ENCODE measurements at regions of chr17 and their contacts with region 1.

Region 1: GRCh38 chr17:36534840-36535668 is at the starts of genes MYO19 and PIGW:
- DNase-seq: peak; percentile 91 to 94 (median 93)
- H3K4me3 ChIP-seq: peak within 1 kb of the TSS; percentile 54 to 96 (median 87)
- H3K27ac ChIP-seq: peak within 1 kb of the TSS; percentile 80 to 93
- H3K4me1 ChIP-seq: peaks cover 3 to 22% (median 16%) of the 10 kb centered on the region in 4 experiments
- H3K27me3 ChIP-seq: no peaks in the 10 kb centered on the region

Region 2: GRCh38 chr17:36072431-36073121 is 462.5 kb before region 1 on chr17:
- CTCF ChIA-PET with region 1: no interaction called
- POLR2A ChIA-PET with region 1: no interaction called
- DNase-seq: peak; percentile 50 to 58 (median 57)
- H3K4me3 ChIP-seq: no peak overlapping the region
- H3K27ac ChIP-seq: no peak overlapping the region
- H3K4me1 ChIP-seq: peaks cover 0 to 7% (median 0%) of the 10 kb centered on the region in 4 experiments
- H3K27me3 ChIP-seq: no peaks in the 10 kb centered on the region

Region 3: DNA sequence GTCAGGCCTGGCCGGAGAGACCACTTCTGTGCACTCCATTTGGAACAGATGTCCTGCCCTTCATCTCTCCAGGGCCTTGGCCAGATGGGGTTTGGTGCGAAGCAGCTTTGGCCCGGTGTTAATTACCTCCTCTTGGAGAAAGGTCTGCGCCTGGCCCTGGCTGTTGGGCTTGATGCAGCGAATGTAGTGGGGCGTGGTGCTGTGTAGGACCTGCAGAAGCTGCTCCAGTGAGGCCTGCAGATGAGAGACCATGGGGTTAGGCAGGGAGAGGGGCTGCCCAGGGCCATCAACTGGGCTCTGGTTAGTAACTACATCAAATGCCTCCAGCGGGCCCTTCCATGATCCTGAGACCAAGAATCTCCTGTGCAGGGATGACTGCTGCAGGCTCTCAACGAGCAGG is 29.9 kb before region 1 on chr17:
- CTCF ChIA-PET with region 1: no interaction called
- POLR2A ChIA-PET with region 1: no interaction called
- DNase-seq: no peak
- H3K4me3 ChIP-seq: no peak overlapping the region
- H3K27ac ChIP-seq: no peak overlapping the region
- H3K4me1 ChIP-seq: no peaks in the 10 kb centered on the region
- H3K27me3 ChIP-seq: no peaks in the 10 kb centered on the region

Region 4: GRCh38 chr17:36545465-36546417 is 10.7 kb after region 1 on chr17:
- CTCF ChIA-PET with region 1: interaction called, 5 read pairs
- POLR2A ChIA-PET with region 1: interaction called, 30 read pairs
- DNase-seq: peak; percentile 99
- H3K4me3 ChIP-seq: peak overlapping the region; percentile 64 to 93 (median 78)
- H3K27ac ChIP-seq: peak overlapping the region; percentile 87 to 94
- H3K4me1 ChIP-seq: peaks cover 16 to 47% (median 34%) of the 10 kb centered on the region in 4 experiments
- H3K27me3 ChIP-seq: no peaks in the 10 kb centered on the region

Region 5: DNA sequence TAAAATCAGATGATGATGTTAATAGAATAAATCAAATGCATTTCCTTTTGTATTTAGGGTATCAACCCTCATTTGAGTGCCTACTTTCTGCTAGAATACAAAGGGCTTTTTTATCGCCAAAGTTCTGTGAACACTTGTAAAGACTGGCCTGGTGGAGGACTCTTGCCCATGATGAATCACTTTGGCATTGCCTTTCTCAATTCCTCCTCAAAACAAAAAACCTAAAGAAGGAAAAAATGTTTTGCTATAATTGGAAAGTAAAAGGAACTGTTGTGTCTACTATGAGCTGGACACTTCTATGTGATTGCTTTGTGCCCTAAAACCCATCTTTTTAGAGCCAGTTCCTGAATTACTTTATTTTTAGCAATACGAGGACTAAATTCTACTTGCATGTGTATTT is 43.6 kb after region 1 on chr17:
- CTCF ChIA-PET with region 1: no interaction called
- POLR2A ChIA-PET with region 1: no interaction called
- DNase-seq: no peak
- H3K4me3 ChIP-seq: no peak overlapping the region
- H3K27ac ChIP-seq: no peak overlapping the region
- H3K4me1 ChIP-seq: no peaks in the 10 kb centered on the region
- H3K27me3 ChIP-seq: no peaks in the 10 kb centered on the region

Region 6: GRCh38 chr17:36601303-36602029 is 66.4 kb after region 1 on chr17 and contains the start of gene MRM1:
- CTCF ChIA-PET with region 1: interaction called, 17 read pairs
- POLR2A ChIA-PET with region 1: no interaction called
- DNase-seq: peak; percentile 84 to 90 (median 87)
- H3K4me3 ChIP-seq: peak within 1 kb of the TSS; percentile 80 to 97 (median 90)
- H3K27ac ChIP-seq: peak within 1 kb of the TSS; percentile 67 to 82
- H3K4me1 ChIP-seq: peaks cover 8 to 38% (median 30%) of the 10 kb centered on the region in 4 experiments
- H3K27me3 ChIP-seq: no peaks in the 10 kb centered on the region

Region 7: GRCh38 chr17:36777118-36777517 is 242.1 kb after region 1 on chr17:
- CTCF ChIA-PET with region 1: no interaction called
- POLR2A ChIA-PET with region 1: no interaction called
- DNase-seq: peak; percentile 7 to 44 (median 43)
- H3K4me3 ChIP-seq: no peak overlapping the region
- H3K27ac ChIP-seq: no peak overlapping the region
- H3K4me1 ChIP-seq: no peaks in the 10 kb centered on the region
- H3K27me3 ChIP-seq: peaks cover 4 to 42% (median 12%) of the 10 kb centered on the region in 5 experiments